ENCODE measurements at regions of chr10 and their contacts with region 1.

Region 1: DNA sequence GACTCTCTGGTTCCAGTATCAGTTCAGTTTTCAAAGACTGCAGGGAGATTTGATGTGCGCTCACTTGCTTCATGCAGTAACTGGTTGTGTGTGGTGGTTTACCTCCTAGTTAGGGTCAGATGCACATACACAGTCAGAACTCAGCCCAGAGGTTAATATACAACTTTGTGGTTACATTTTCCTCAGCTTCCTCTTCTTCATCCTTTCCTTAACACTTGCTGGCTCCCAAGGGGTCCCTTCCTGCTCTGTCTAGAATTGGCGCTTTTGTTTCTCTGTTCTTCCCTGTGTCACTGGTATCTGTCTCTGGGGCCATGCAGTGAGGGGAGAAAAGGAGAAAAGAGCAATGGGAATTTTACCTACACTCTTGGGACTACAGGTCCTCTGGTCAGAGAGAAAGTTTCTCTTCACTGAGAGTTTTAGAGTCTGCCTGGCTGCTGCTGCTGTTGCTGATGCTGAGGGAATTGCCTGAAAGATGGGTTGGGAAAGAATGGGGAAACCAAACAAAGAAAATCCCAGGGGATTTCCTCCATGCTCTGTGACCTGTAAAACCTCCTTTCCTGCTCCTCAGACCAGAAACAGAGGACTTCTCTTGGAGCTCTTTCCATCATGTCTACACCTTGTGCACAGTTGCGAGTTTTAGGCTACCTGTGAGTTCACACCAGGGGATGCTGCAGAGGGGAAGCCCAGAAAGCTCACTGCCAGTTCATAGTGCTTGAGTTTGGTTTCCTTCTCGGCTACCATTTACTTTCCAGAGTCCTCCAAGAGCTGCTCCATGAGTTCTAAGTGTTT is 74.6 kb downstream of the WDFY4 start:
- DNase-seq: peak; percentile 81
- ATAC-seq: peak; percentile 96
- H3K4me3 ChIP-seq: no peak overlapping the region
- H3K27ac ChIP-seq: peak overlapping the region; percentile 76
- H3K4me1 ChIP-seq: peaks cover 23% of the 10 kb centered on the region
- H3K27me3 ChIP-seq: no peaks in the 10 kb centered on the region
- CTCF ChIP-seq: 0 out of 6 replicates have a peak, but pooled peaks of 1 of the 3 experiments have one; percentile 2
- EP300 ChIP-seq: peak; percentile 78 to 83; a peak in 3 of 4 replicates
- POLR2A ChIP-seq: no peak
- RAD21 ChIP-seq: no peak

Region 2: GRCh38 chr10:48872234-48872633 is 112.9 kb after region 1 on chr10:
- CTCF ChIA-PET with region 1: no interaction called
- POLR2A ChIA-PET with region 1: no interaction called
- RAD21 ChIA-PET with region 1: no interaction called
- SMC1A ChIA-PET with region 1: no interaction called
- in situ Hi-C with region 1: loop called (anchors 25 kb)
- intact Hi-C with region 1: no loop called
- DNase-seq: no peak
- ATAC-seq: peak; percentile 47; the same call in 1 of the 3 replicates
- H3K4me3 ChIP-seq: no peak overlapping the region
- H3K27ac ChIP-seq: no peak overlapping the region
- H3K4me1 ChIP-seq: no peaks in the 10 kb centered on the region
- H3K27me3 ChIP-seq: no peaks in the 10 kb centered on the region
- CTCF ChIP-seq: no peak
- EP300 ChIP-seq: no peak
- POLR2A ChIP-seq: no peak
- RAD21 ChIP-seq: no peak